ENCODE measurements at regions of chrX and their contacts with region 1.

Region 1: DNA sequence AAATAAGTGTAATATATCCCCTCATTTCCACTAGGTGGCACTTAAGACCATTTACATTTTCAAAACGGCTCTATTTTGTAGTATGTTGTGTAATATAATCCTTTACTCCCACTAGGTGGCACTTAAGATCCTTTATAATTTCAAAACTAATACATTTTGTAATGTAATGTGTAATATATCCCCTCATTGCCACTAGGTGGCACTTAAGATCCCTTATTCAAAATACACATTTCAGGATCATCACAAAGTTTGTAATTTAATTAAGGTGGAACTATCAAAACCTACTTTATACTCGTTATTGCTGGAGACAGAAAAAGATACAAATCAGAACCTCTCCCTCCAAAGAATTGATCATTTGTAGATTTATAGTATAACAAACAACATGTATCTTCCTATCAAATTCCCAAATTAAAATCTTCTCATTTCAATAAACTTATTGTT is 132.5 kb downstream of the ARHGAP6 start:
- DNase-seq: no peak
- H3K4me3 ChIP-seq: no peak overlapping the region
- CTCF ChIP-seq: peak in 1 of 3 donors; percentile 33
- POLR2A ChIP-seq: no peak

Region 2: DNA sequence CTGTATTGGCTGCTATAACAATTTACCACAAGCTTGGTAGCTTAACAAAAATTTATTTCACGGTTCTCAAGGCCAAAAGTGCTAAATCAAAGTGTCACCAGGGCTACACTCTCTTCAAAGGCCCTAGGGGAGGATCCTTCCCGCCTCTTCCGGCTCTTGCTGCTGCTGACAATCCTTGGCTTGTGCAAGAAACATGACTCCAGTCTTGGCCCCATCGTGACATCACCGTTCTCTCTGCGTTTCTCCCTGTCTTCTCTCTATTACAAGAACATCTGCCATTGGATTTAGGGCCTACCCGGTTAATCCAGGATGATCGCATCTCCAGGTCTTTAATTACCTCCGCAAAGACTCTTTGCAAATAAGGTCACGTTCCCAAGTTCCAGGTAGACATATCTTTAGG is 1386.9 kb before region 1 on chrX:
- intact Hi-C with region 1: no loop called
- DNase-seq: no peak
- H3K4me3 ChIP-seq: no peak overlapping the region
- CTCF ChIP-seq: no peak
- POLR2A ChIP-seq: no peak

Region 3: DNA sequence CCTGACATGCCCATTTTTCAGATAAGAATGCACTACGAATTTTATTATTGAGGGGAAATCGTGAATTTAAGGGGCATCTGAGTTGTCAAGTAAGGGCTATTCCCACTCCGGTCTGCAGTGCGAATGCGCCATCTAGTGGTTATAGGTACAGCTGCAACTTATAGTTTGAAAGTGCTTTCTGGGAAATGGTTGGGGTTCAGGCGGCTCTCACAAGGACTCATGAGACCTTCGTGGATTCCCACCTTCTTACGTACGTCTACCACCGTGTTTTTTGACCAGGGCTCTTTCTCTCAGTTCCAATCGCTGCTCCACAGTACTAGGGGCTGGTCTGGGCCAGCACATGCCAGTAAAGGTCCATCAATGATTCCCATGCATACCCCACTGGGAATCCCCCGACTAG is 237.1 kb after region 1 on chrX:
- intact Hi-C with region 1: loop called (anchors 10 kb)
- DNase-seq: no peak
- H3K4me3 ChIP-seq: no peak overlapping the region
- CTCF ChIP-seq: no peak
- POLR2A ChIP-seq: no peak

Measured in lower leg skin (tissue), 4 donors.